ENCODE measurements at regions of chr13 and their contacts with region 1.

Region 1: GRCh38 chr13:109275852-109276251 is 510.5 kb downstream of the IRS2 start:
- DNase-seq: no peak
- ATAC-seq: 0 out of 2 replicates have a peak, but pooled peaks have one; percentile 6
- H3K4me3 ChIP-seq: no peak overlapping the region
- H3K27ac ChIP-seq: no peak overlapping the region
- H3K4me1 ChIP-seq: peaks cover 34% of the 10 kb centered on the region
- H3K27me3 ChIP-seq: no peaks in the 10 kb centered on the region
- CTCF ChIP-seq: peak; percentile 35; the same call in 1 of the 2 replicates

Region 2: GRCh38 chr13:108915634-108916512 is 360.0 kb before region 1 on chr13:
- CTCF ChIA-PET with region 1: no interaction called
- POLR2A ChIA-PET with region 1: no interaction called
- intact Hi-C with region 1: loop called (anchors 10 kb)
- DNase-seq: peak; percentile 86
- ATAC-seq: peak; percentile 60
- H3K4me3 ChIP-seq: peak overlapping the region; percentile 53
- H3K27ac ChIP-seq: peak overlapping the region; percentile 73
- H3K4me1 ChIP-seq: peaks cover 51% of the 10 kb centered on the region
- H3K27me3 ChIP-seq: no peaks in the 10 kb centered on the region
- CTCF ChIP-seq: no peak

Region 3: GRCh38 chr13:108961542-108962125 is 314.2 kb before region 1 on chr13:
- CTCF ChIA-PET with region 1: no interaction called
- POLR2A ChIA-PET with region 1: no interaction called
- intact Hi-C with region 1: loop called (anchors 10 kb)
- DNase-seq: peak; percentile 67
- ATAC-seq: peak; percentile 48
- H3K4me3 ChIP-seq: no peak overlapping the region
- H3K27ac ChIP-seq: no peak overlapping the region
- H3K4me1 ChIP-seq: 0 out of 2 replicates have a peak, but pooled peaks cover 6% of the 10 kb centered on the region
- H3K27me3 ChIP-seq: no peaks in the 10 kb centered on the region
- CTCF ChIP-seq: peak; percentile 83

Region 4: DNA sequence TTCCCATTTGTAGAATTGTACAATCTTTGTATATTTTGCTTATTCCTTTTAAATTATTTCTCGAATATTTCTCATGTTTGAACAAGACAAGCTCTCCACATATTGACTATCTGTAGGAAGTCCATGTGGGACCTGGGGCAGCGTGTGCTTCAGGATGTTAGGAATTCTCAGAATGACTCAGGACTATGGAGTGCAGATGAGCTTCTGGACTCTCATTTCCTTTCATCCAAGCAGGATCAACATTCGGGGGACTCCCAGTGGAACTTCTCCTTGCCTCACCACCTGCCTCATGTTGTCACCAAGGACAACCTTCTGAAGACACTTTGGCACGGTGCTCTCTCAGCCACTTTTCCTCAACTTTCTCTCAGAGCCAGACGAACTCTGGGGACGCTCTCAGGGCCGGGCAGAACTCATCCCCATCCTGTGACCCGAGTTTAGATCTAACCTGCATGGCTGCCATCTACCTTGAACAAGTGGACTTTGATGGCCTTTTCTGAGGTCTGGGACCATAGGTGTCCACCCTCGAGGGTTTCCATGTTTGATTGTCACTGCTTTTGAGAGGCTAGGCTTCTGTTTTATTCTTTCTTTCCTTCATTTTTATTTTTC is 68.8 kb after region 1 on chr13:
- CTCF ChIA-PET with region 1: no interaction called
- POLR2A ChIA-PET with region 1: no interaction called
- intact Hi-C with region 1: loop called (anchors 5 kb)
- DNase-seq: peak; percentile 55
- ATAC-seq: peak; percentile 66
- H3K4me3 ChIP-seq: no peak overlapping the region
- H3K27ac ChIP-seq: no peak overlapping the region
- H3K4me1 ChIP-seq: peaks cover 34% of the 10 kb centered on the region
- H3K27me3 ChIP-seq: no peaks in the 10 kb centered on the region
- CTCF ChIP-seq: no peak

Region 5: GRCh38 chr13:109494925-109495345 is 219.1 kb after region 1 on chr13:
- CTCF ChIA-PET with region 1: no interaction called
- POLR2A ChIA-PET with region 1: no interaction called
- intact Hi-C with region 1: loop called (anchors 10 kb)
- DNase-seq: peak; percentile 74
- ATAC-seq: peak; percentile 86
- H3K4me3 ChIP-seq: peak overlapping the region; percentile 48
- H3K27ac ChIP-seq: peak overlapping the region; percentile 89
- H3K4me1 ChIP-seq: peaks cover 38% of the 10 kb centered on the region
- H3K27me3 ChIP-seq: no peaks in the 10 kb centered on the region
- CTCF ChIP-seq: no peak

Region 6: DNA sequence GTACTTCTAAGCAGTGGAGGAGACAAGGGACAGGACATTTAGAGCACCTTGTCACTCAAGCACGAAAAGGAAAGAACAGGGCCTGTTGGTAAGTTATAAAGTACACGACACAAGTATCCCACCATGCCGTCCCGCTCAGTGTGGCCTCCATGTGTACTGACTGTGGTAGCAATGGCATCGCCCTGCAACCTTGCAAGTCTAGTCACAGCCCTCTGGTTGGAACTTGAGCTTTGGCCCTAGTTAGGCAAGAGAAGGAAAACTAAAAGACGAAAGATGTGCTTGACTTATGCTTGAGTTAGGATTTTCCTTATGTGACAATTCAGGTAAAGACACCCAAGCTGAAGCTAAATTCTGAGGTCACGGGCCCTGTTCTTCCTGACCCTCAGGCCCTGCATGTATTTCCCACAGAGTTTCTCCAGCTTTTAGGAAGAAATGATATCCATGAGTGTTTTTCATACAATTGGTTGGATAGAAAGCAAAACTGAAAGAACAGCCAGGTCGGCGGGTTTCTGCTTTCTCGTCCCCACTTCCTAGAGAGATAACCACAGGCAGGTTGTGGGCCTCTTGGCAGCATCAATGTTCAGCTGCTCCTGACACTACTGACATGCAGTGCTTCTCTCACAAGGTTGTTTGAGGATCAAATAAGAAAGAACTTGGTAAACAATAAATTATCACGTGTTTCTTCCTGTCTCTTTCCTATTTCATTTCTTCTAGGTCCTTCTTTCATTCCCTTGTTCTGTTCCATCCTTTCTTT is 294.3 kb after region 1 on chr13:
- CTCF ChIA-PET with region 1: no interaction called
- POLR2A ChIA-PET with region 1: no interaction called
- intact Hi-C with region 1: loop called (anchors 5 kb)
- DNase-seq: no peak
- ATAC-seq: no peak
- H3K4me3 ChIP-seq: no peak overlapping the region
- H3K27ac ChIP-seq: no peak overlapping the region
- H3K4me1 ChIP-seq: no peaks in the 10 kb centered on the region
- H3K27me3 ChIP-seq: no peaks in the 10 kb centered on the region
- CTCF ChIP-seq: no peak

Region 7: GRCh38 chr13:110108347-110109174 is 832.7 kb after region 1 on chr13:
- CTCF ChIA-PET with region 1: no interaction called
- POLR2A ChIA-PET with region 1: no interaction called
- intact Hi-C with region 1: loop called (anchors 5 kb)
- DNase-seq: peak; percentile 80
- ATAC-seq: peak; percentile 91
- H3K4me3 ChIP-seq: no peak overlapping the region
- H3K27ac ChIP-seq: no peak overlapping the region
- H3K4me1 ChIP-seq: peaks cover 14% of the 10 kb centered on the region
- H3K27me3 ChIP-seq: no peaks in the 10 kb centered on the region
- CTCF ChIP-seq: peak; percentile 78